AG04449 (cell line): ENCODE measurements at regions of chr20 and their contacts with region 1.

Region 1: GRCh38 chr20:3854462-3854871 is 7.8 kb downstream of the MAVS start:
- DNase-seq: no peak
- H3K4me3 ChIP-seq: no peak overlapping the region
- CTCF ChIP-seq: no peak

Region 2: DNA sequence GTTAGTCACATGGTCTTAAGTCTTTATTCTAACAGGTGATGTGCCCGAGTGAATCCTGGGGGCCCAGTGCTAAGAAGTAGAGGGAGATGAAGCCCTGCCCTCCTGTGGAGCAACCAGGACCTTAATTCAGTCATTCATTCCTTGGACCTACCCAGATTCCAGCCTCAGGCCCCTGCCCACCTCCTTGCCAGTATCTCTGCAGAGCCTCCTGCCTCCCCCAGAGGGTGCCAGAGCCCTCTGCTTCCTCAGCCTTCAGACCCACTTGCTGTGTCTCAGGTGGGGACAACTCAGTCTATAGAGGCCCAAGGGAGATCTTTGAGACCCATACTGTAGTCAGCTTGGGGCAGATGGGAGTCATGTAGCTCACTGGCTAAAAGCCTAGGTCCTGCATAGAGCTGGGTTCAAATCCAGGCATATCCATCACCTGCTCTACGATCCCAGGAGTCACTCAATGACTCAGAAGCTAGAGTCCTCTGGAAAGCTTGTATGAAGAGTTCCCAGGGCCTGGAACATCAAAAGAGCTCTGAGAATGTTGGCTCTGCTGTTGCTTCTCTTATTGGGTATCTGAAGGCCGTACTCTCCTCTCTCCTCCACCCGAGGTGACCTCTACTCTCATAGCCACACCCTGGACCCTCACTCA is 138.2 kb before region 1 on chr20:
- CTCF ChIA-PET with region 1: interaction called, 15 read pairs
- POLR2A ChIA-PET with region 1: no interaction called
- DNase-seq: no peak
- H3K4me3 ChIP-seq: no peak overlapping the region
- CTCF ChIP-seq: peak; percentile 86

Region 3: GRCh38 chr20:3753098-3753980 is 101.1 kb before region 1 on chr20:
- CTCF ChIA-PET with region 1: interaction called, 16 read pairs
- POLR2A ChIA-PET with region 1: no interaction called
- DNase-seq: peak; percentile 16
- H3K4me3 ChIP-seq: no peak overlapping the region
- CTCF ChIP-seq: peak; percentile 83

Region 4: DNA sequence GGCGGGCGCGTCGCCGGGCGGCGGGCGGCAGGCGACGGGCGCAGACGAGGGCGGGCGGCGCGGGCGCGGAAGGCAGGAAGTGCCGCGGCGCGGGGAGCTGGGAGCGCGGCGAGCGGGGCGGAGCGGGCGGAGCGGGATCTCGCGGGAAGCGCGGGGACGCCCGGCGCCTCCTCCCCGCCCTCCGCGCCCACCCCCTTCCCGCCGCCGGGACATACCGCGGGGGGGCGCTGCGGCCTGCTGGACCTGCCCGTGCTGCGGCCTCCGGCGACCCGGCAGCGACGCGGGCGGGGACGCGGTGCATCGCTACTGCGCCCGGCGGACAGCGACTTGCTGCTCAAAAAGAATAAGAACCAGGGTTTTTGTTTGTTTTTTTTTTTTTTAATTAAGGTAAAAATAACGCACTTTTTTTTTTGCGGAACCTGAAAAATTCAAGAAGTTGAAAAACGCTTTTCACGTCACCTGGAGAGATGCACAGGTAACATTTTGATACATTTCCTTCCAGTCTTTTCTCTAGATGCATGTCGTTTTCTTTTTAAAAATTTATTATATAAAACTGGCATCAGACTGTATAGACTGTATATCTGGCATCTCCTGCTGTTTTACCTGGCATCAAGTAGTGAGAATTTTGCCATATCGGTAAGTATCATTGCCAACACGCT is 67.7 kb before region 1 on chr20 and contains the start of gene CENPB:
- CTCF ChIA-PET with region 1: interaction called, 52 read pairs
- POLR2A ChIA-PET with region 1: no interaction called
- DNase-seq: no peak
- H3K4me3 ChIP-seq: peak within 1 kb of the TSS; percentile 80
- CTCF ChIP-seq: peak; percentile 70

Region 5: DNA sequence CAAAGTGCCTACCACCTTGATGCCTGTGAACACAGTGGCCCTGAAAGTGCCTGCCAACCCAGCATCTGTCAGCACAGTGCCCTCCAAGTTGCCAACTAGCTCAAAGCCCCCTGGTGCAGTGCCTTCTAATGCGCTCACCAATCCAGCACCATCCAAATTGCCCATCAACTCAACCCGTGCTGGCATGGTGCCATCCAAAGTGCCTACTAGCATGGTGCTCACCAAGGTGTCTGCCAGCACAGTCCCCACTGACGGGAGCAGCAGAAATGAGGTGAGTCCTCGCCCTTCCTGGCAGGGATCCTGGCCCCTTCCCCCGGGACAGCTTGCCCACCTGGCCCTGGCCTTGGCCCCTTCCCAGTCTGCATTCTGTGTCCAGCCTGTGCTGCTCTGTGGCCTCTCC is 10.1 kb after region 1 on chr20:
- CTCF ChIA-PET with region 1: interaction called, 22 read pairs
- POLR2A ChIA-PET with region 1: interaction called, 3 read pairs
- DNase-seq: no peak
- H3K4me3 ChIP-seq: no peak overlapping the region
- CTCF ChIP-seq: no peak

Region 6: GRCh38 chr20:3887876-3888620 is 33.6 kb after region 1 on chr20:
- CTCF ChIA-PET with region 1: interaction called, 17 read pairs
- POLR2A ChIA-PET with region 1: no interaction called
- DNase-seq: no peak
- H3K4me3 ChIP-seq: peak overlapping the region; percentile 98
- CTCF ChIP-seq: no peak